Mucosa of descending colon (tissue), 3 donors: ENCODE measurements at regions of chr6 and their contacts with region 1.

Region 1: GRCh38 chr6:123316733-123317323 is 319.9 kb downstream of the TRDN start:
- DNase-seq: no peak
- ATAC-seq: no peak
- H3K4me3 ChIP-seq: peak overlapping the region; percentile 6
- H3K4me1 ChIP-seq: no peaks in the 10 kb centered on the region
- CTCF ChIP-seq: no peak

Region 2: DNA sequence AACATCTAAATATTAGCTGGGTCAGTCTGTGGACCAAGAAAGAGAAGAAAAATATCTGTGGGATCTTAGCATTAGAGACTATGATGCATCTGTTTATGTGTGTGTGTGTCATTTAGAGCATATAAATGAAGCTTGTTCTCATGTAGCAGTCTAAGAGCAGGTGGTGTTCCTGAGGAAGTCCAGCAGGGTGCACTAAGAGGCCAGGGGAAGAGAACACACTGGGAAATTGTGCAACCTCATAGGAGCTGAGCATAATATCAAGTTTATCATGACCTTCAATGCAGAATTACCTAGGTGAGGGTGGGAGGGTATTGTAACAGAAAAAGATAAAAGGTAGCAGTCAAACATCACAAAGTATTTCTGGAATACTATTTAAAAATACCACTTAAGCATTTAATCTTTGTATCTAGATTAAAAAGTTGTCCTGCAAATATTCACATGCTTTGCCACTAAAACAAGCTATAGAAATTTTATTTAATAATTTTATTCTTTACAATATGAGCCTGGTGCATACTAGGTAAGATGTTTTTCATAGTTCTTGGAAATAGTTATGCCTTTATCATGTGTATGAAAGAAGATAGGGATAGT is 447.3 kb before region 1 on chr6:
- intact Hi-C with region 1: loop called in 1 of 2 experiments (anchors 10 kb)
- DNase-seq: peak in 1 of 3 donors; percentile 34
- ATAC-seq: peak; percentile 83
- H3K4me3 ChIP-seq: no peak overlapping the region
- H3K4me1 ChIP-seq: no peaks in the 10 kb centered on the region
- CTCF ChIP-seq: peak; percentile 18

Region 3: DNA sequence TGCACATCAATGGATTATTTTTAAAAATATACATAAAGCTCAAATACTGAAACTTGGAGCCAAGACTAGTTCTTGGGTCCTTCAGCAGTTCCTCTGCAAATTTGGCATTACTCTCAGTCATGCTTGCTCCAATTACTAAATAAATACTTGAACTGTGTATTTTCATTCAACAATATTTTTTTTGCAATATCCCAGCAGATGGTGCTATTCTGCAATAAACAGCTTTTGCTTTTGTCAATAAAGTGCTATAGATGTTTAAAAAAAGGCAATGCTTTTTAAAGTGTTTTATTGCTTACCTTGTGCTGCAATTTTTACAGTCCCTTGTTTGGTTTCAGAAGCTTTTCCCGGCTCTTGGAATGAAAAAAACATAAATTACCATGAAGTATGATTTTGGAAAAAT is 76.5 kb after region 1 on chr6:
- intact Hi-C with region 1: no loop called
- DNase-seq: no peak
- ATAC-seq: no peak
- H3K4me3 ChIP-seq: no peak overlapping the region
- H3K4me1 ChIP-seq: no peaks in the 10 kb centered on the region
- CTCF ChIP-seq: no peak

Region 4: DNA sequence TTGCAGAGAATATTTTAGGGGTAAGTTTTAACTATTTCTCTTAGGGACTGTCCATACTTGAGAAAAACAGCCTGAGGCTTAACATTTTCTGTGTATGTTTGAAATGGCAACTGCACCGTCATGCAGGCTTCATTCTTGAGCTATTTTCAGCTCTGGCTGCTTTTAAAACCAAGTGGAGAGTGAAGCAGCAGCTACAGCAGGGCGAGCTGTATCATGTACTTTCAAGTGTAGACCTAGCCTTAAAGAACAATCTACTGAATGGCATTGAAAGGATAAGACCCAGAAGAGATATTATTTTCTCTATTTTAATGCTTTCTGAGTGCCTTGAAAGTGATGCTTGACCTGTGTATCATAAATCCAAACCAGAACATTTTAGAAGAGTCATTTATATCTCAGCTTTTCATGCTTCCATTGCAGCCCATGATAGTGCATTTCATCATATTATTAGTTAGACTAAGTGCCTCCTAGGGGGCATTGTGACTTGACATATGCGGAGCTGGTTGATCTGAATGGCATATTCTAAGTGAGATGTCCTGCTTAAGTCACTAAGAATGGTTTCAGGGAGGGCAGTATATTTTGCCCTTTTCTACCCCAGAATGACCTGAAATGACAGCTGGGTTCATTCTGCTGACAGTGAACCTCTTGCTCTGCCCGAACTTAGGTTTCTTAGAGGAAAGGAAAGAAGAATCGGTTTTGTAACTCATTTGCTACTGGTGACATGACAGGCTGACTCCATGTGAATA is 572.1 kb after region 1 on chr6:
- intact Hi-C with region 1: no loop called
- DNase-seq: no peak
- ATAC-seq: no peak
- H3K4me3 ChIP-seq: no peak overlapping the region
- H3K4me1 ChIP-seq: no peaks in the 10 kb centered on the region
- CTCF ChIP-seq: no peak